HCT116 (cell line): ENCODE measurements at regions of chr15 and their contacts with region 1.

Region 1: DNA sequence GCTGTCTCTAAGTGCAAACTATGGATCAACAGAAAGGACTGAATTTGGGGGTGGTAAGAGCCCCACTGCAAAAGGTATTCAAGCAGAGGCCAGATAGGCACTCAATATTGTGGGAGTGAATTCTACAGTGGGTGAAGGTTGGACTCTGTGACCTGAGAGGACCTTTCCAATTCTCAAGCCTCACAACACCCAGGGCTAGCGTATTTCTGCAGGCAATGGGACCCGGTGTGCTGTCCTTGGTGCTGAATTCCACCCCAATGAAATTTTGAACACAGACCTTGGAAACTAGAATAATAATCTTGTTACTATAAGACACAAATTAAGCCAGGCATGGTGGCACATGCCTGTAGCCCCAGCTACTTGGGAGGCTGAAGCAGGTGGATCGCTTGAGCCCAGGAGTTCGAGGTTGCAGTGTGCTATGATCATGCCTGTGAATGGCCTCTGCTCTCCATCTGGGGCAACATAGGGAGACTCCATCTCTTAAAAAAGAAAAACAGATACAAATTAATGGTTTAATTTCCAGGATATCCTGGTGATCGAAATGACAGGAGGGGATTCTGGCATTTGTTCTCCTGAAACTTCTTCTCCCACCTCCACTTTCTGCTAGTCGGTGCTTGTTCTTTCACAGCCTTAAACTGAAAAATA is 135.4 kb downstream of the RAB11A start:
- DNase-seq: no peak
- ATAC-seq: no peak
- H3K4me3 ChIP-seq: no peak overlapping the region
- H3K27ac ChIP-seq: no peak overlapping the region
- H3K4me1 ChIP-seq: peaks cover 0 to 20% of the 10 kb centered on the region in 2 experiments; a peak in 2 of 4 replicates
- H3K27me3 ChIP-seq: peaks cover 14% of the 10 kb centered on the region
- CTCF ChIP-seq: no peak
- POLR2A ChIP-seq: no peak
- RAD21 ChIP-seq: no peak

Region 2: GRCh38 chr15:65957451-65957850 is 47.3 kb before region 1 on chr15:
- CTCF ChIA-PET with region 1: no interaction called
- POLR2A ChIA-PET with region 1: no interaction called
- RAD21 ChIA-PET with region 1: no interaction called
- intact Hi-C with region 1: loop called (anchors 5 kb)
- DNase-seq: no peak
- ATAC-seq: no peak
- H3K4me3 ChIP-seq: no peak overlapping the region
- H3K27ac ChIP-seq: no peak overlapping the region
- H3K4me1 ChIP-seq: peaks cover 7 to 17% of the 10 kb centered on the region in 2 experiments
- H3K27me3 ChIP-seq: peaks cover 18% of the 10 kb centered on the region
- CTCF ChIP-seq: no peak
- POLR2A ChIP-seq: no peak
- RAD21 ChIP-seq: no peak

Region 3: DNA sequence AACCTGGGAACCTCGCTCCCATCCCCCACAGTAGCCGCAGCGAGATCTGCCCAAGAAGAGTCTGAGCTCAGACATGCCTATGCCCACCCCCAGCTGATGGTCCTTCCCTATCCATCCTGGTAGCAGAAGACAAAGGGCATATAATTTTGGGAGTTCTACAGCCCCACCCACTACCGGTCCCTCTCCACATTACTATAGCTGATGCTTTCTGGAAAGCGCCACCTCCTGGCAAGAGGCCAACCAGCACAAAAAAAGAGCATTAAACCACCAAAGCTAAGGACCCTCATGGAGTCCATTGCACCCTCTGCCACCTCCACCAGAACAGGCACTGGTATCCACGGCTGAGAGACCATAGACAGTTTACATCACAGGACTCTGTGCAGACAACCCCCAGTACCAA is 80.4 kb after region 1 on chr15:
- CTCF ChIA-PET with region 1: no interaction called
- POLR2A ChIA-PET with region 1: no interaction called
- RAD21 ChIA-PET with region 1: no interaction called
- intact Hi-C with region 1: loop called (anchors 5 kb)
- DNase-seq: no peak
- ATAC-seq: peak; percentile 65
- H3K4me3 ChIP-seq: no peak overlapping the region
- H3K27ac ChIP-seq: no peak overlapping the region
- H3K4me1 ChIP-seq: no peaks in the 10 kb centered on the region
- H3K27me3 ChIP-seq: no peaks in the 10 kb centered on the region
- CTCF ChIP-seq: peak in 2 of 3 experiments; percentile 16 to 47; a peak in 2 of 6 replicates
- POLR2A ChIP-seq: no peak
- RAD21 ChIP-seq: peak; percentile 33; the same call in 1 of the 2 replicates

Region 4: DNA sequence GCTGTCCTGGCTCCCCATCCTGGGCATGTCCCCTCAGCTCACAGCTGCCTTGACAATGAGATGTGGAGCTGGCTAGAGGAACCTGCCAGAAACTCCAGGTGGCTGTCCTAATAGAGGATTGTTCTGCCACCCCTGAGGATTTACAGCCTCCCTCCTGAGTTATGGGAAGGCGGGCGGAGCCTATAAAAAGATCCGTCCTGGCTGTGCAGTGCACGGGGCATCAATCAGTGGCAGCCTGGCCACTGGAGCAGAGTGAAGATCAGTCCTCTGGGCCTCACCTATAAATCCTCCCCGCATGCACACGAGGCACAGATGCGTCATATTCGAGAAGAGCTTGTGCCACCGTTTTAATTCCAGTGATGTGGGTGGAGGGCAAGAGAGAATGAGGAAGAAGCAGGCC is 158.8 kb after region 1 on chr15:
- CTCF ChIA-PET with region 1: no interaction called
- POLR2A ChIA-PET with region 1: no interaction called
- RAD21 ChIA-PET with region 1: no interaction called
- intact Hi-C with region 1: no loop called
- DNase-seq: no peak
- ATAC-seq: no peak
- H3K4me3 ChIP-seq: no peak overlapping the region
- H3K27ac ChIP-seq: no peak overlapping the region
- H3K4me1 ChIP-seq: no peaks in the 10 kb centered on the region
- H3K27me3 ChIP-seq: no peaks in the 10 kb centered on the region
- CTCF ChIP-seq: no peak
- POLR2A ChIP-seq: no peak
- RAD21 ChIP-seq: no peak

Region 5: DNA sequence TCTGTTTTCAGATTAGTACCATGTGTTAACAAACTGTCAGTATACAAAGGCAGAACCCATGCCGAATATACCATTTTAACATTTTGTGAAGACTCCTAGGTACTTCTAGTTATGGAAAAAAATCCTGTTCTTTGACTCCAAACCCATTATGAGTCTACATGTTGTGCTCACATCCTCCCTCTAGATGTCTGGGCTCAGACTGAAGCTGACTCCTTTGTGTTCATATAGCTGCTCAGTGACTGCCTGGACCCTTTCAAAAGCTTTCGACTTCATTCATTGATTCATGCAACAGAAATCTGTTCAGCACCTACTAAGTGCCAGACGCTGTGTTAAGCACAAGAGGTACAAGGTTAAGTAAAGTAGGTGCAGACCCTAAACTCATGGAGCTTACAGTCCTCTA is 188.3 kb after region 1 on chr15:
- CTCF ChIA-PET with region 1: no interaction called
- POLR2A ChIA-PET with region 1: no interaction called
- RAD21 ChIA-PET with region 1: no interaction called
- intact Hi-C with region 1: loop called (anchors 5 kb)
- DNase-seq: no peak
- ATAC-seq: no peak
- H3K4me3 ChIP-seq: no peak overlapping the region
- H3K27ac ChIP-seq: no peak overlapping the region
- H3K4me1 ChIP-seq: peaks cover 4 to 12% of the 10 kb centered on the region in 2 experiments; a peak in 3 of 4 replicates
- H3K27me3 ChIP-seq: no peaks in the 10 kb centered on the region
- CTCF ChIP-seq: no peak
- POLR2A ChIP-seq: no peak
- RAD21 ChIP-seq: no peak

Region 6: GRCh38 chr15:66386204-66387123 is 381.7 kb after region 1 on chr15 and contains the start of gene MAP2K1:
- CTCF ChIA-PET with region 1: no interaction called
- POLR2A ChIA-PET with region 1: no interaction called
- RAD21 ChIA-PET with region 1: no interaction called
- intact Hi-C with region 1: no loop called
- DNase-seq: peak; percentile 90
- ATAC-seq: peak; percentile 93
- H3K4me3 ChIP-seq: peak within 1 kb of the TSS; percentile 64 to 86
- H3K27ac ChIP-seq: peak within 1 kb of the TSS; percentile 79
- H3K4me1 ChIP-seq: peaks cover 4 to 28% of the 10 kb centered on the region in 2 experiments; a peak in 3 of 4 replicates
- H3K27me3 ChIP-seq: no peaks in the 10 kb centered on the region
- CTCF ChIP-seq: peak; percentile 52; a peak in 3 of 6 replicates
- POLR2A ChIP-seq: peak; percentile 52
- RAD21 ChIP-seq: peak; percentile 54
- total RNA-seq, gene MAP2K1: 52.3 TPM